Thyroid gland (tissue), 4 donors: ENCODE measurements at regions of chr2 and their contacts with region 1.

Region 1: GRCh38 chr2:208346756-208347155 is 59.8 kb upstream of the PTH2R start:
- DNase-seq: no peak
- H3K4me3 ChIP-seq: no peak overlapping the region
- H3K27ac ChIP-seq: no peak overlapping the region
- H3K4me1 ChIP-seq: no peaks in the 10 kb centered on the region
- H3K27me3 ChIP-seq: no peaks in the 10 kb centered on the region
- CTCF ChIP-seq: no peak
- POLR2A ChIP-seq: no peak

Region 2: GRCh38 chr2:208366215-208367127 is 19.7 kb after region 1 on chr2:
- intact Hi-C with region 1: loop called (anchors 2 kb)
- DNase-seq: no peak
- H3K4me3 ChIP-seq: no peak overlapping the region
- H3K27ac ChIP-seq: no peak overlapping the region
- H3K4me1 ChIP-seq: no peaks in the 10 kb centered on the region
- H3K27me3 ChIP-seq: no peaks in the 10 kb centered on the region
- CTCF ChIP-seq: no peak
- POLR2A ChIP-seq: no peak

Region 3: DNA sequence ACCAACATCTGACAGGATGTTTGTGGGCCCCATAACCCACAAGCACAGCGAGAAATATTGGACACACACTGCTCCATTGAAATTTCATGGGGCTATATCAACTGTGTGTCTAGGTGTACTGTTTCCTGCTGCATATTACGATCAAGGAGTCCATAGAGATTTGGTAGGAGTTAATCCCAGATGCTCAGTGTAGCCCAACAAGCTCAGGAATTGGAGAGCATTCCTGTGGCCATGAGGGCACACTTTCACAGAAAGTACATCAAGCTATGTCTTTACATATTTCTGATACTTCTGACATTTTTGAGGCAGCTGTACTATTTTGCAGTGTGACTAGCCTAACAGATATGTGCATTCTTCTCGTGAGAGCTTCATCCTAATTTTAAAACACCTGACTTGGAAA is 532.9 kb after region 1 on chr2:
- intact Hi-C with region 1: no loop called
- DNase-seq: no peak
- H3K4me3 ChIP-seq: no peak overlapping the region
- H3K27ac ChIP-seq: no peak overlapping the region
- H3K4me1 ChIP-seq: no peaks in the 10 kb centered on the region
- H3K27me3 ChIP-seq: no peaks in the 10 kb centered on the region
- CTCF ChIP-seq: no peak
- POLR2A ChIP-seq: no peak